T-cell (primary cell): ENCODE measurements at regions of chr2 and their contacts with region 1.

Region 1: DNA sequence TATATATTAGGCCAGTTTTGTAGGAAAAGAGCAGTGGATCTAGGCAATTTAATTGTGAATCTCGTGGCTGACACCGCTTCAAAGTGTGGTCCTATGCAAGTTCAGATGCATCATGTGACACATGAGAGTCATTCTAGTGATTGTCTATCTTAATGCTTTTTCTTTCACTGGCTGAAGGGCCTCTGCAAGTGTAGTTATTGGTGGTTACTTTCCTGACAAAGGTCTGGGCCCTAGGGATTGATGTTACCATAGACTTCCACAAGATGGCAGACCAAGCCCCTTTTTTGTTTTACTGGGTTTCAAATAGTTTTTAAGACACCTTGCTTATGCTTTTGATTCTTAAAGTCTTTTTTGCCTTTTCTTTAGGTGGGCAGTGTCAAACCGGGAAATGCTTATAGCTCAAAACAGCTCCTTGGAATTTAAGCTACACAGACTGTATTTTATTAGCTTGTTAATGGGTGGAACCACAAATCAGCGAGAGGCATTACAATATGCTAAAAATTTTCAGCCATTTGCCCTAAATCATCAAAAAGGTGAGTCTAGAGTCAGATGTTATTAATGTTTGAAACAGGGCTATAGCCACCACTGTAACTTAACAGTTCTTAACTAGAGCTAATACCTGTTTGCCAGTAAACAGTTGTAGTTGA is 25.9 kb downstream of the CD8A start:
- DNase-seq: peak in 16 of 35 experiments; percentile 10 to 74 (median 33)
- ATAC-seq: peak; percentile 58 to 75 (median 72)
- H3K4me3 ChIP-seq: no peak overlapping the region
- H3K4me3 Mint-ChIP-seq: no peak overlapping the region
- H3K27ac ChIP-seq: no peak overlapping the region
- H3K27ac Mint-ChIP-seq: peak overlapping the region in 1 of 2 donors; percentile 59
- H3K4me1 ChIP-seq: no peaks in the 10 kb centered on the region
- H3K4me1 Mint-ChIP-seq: peaks cover 19 to 31% (median 22%) of the 10 kb centered on the region in 3 donors
- H3K27me3 ChIP-seq: no peaks in the 10 kb centered on the region
- H3K27me3 Mint-ChIP-seq: no peaks in the 10 kb centered on the region

Region 2: DNA sequence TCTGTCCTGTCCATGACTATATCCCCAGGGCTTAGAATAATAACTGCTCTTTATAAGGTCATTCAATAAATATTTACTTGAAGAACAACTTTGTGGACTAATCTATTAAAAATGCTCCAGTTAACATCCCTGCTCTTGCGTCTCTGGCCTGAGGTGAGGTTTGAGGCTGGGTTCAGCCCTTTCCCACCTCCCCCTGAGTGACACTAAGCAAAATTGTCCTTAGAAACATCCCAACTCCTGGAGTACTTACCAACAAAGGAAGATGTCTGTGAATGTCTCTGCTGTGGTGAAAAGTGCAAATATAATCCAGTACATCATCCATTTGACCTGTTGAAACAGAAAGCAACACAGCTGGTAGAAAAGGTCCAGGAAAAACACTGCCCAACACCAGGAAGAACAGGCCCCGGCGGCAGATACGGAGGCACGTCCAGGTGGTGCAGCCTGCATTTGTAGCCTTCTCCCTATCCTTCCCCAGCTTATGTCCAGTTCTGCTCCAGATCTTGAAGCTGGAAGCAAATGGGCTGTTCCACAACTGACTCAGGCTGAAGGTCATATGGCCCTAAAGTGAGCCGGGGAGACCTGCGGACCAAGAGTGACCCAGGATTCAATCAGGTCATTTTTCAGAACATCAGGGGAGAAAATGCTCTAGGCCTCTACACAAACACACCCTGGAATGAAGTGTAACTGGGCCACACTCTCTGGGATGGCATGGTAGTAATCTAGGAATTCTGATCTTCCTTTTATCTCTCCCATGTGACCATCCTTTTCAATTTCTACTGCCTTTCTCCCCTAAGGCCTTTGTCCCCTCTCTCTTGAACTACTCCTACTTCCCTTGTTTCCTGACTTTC is 500.8 kb before region 1 on chr2:
- CTCF ChIA-PET with region 1: interaction called in 1 of 2 experiments, 13 read pairs
- POLR2A ChIA-PET with region 1: no interaction called
- DNase-seq: no peak
- ATAC-seq: no peak
- H3K4me3 ChIP-seq: no peak overlapping the region
- H3K4me3 Mint-ChIP-seq: no peak overlapping the region
- H3K27ac ChIP-seq: no peak overlapping the region
- H3K27ac Mint-ChIP-seq: no peak overlapping the region
- H3K4me1 ChIP-seq: no peaks in the 10 kb centered on the region
- H3K4me1 Mint-ChIP-seq: no peaks in the 10 kb centered on the region
- H3K27me3 ChIP-seq: peaks cover 0 to 4% of the 10 kb centered on the region in 2 experiments
- H3K27me3 Mint-ChIP-seq: peaks cover 13 to 21% of the 10 kb centered on the region in 2 donors

Region 3: GRCh38 chr2:86570059-86570458 is 194.7 kb before region 1 on chr2:
- CTCF ChIA-PET with region 1: no interaction called
- POLR2A ChIA-PET with region 1: no interaction called
- DNase-seq: no peak
- ATAC-seq: no peak
- H3K4me3 ChIP-seq: no peak overlapping the region
- H3K4me3 Mint-ChIP-seq: no peak overlapping the region
- H3K27ac ChIP-seq: no peak overlapping the region
- H3K27ac Mint-ChIP-seq: no peak overlapping the region
- H3K4me1 ChIP-seq: no peaks in the 10 kb centered on the region
- H3K4me1 Mint-ChIP-seq: no peaks in the 10 kb centered on the region
- H3K27me3 ChIP-seq: no peaks in the 10 kb centered on the region
- H3K27me3 Mint-ChIP-seq: no peaks in the 10 kb centered on the region

Region 4: GRCh38 chr2:86753606-86754005 is 11.2 kb before region 1 on chr2:
- CTCF ChIA-PET with region 1: interaction called, 4 to 10 read pairs
- POLR2A ChIA-PET with region 1: no interaction called
- DNase-seq: no peak
- ATAC-seq: no peak
- H3K4me3 ChIP-seq: no peak overlapping the region
- H3K4me3 Mint-ChIP-seq: no peak overlapping the region
- H3K27ac ChIP-seq: no peak overlapping the region
- H3K27ac Mint-ChIP-seq: no peak overlapping the region
- H3K4me1 ChIP-seq: no peaks in the 10 kb centered on the region
- H3K4me1 Mint-ChIP-seq: peaks cover 21 to 31% (median 27%) of the 10 kb centered on the region in 3 donors
- H3K27me3 ChIP-seq: no peaks in the 10 kb centered on the region
- H3K27me3 Mint-ChIP-seq: no peaks in the 10 kb centered on the region